PC-3 (cell line): ENCODE measurements at regions of chr1 and their contacts with region 1.

Region 1: DNA sequence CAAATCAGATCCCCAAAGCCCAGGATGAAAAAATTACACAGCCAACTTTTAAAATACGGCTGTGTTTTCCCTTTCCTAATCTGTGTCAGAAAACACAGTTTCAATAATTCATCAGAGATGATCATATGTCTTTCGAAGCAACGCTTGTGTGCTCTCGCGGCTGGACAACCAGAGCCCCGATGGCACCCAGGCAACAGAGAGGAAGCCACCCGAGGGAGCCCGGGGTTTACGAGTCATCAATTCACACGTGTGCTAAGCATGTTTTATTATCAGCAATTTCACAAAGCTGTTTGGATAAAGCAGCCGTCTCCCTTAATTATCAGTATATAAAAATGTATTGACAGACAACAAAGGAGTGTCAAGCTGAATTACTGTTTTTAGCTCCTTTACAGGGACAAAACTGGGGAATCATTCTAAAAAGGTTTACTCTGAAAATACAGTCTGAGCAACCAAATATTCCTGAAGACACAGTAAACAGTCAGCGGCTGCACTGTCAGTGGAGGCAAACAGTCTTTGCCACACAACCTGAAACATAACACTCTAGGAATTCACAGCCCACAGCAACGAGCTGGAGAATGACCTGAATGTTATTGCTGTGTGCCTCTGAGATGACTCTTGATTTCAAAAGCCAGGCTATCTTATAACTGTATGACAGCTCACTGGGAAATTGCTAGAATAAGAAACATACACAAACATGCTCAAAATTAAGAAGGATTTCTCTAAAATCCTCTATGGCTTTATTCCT is 201.0 kb downstream of the SIPA1L2 start:
- DNase-seq: peak; percentile 62
- ATAC-seq: peak; percentile 58
- H3K4me3 ChIP-seq: no peak overlapping the region
- H3K27ac ChIP-seq: no peak overlapping the region
- H3K4me1 ChIP-seq: peaks cover 31% of the 10 kb centered on the region
- H3K27me3 ChIP-seq: no peaks in the 10 kb centered on the region
- CTCF ChIP-seq: no peak

Region 2: DNA sequence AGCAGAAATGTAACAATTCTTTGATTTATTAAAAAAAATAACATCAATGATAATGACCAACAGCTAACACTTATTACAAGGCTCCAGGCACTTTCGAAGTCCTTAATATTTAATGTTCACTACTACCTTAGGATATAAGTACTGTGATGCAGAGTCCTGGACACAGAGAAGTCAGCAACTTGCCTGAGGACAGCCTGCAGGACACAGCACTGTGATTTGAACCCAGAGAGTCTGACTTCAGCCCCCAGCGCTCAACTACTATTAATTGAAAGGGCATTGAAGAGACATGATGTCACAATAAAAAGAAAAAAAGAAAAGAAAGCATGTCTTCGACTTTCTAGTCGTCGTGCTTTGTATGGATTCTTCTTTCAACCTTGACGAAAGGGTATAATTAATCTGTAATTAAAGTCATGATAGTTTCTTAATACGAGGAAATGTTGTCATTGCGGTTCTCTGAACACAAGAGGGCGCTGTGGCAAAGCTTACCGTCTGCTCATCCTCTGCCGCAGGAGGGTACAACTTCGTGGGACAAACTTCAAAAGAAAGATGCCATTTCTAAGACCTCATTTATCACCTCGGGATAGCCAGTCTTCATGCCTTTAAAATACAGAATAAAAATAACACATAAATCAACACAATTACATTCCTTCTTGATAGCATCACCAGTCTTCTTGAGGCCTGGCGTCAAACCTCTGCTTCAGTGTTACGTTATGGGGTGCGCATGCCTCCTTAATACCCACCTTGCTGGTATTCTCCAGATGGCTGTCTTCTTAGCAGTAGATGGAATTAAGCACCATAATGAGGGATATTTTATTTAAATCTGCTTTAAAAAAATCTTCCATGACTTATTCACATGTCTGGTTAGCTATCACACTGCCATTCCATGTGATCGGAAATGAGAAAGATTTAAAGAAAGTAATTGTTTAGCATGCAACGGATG is 562.3 kb before region 1 on chr1:
- CTCF ChIA-PET with region 1: no interaction called
- POLR2A ChIA-PET with region 1: no interaction called
- intact Hi-C with region 1: loop called (anchors 10 kb)
- DNase-seq: peak; percentile 79
- ATAC-seq: peak; percentile 67
- H3K4me3 ChIP-seq: no peak overlapping the region
- H3K27ac ChIP-seq: no peak overlapping the region
- H3K4me1 ChIP-seq: peaks cover 5% of the 10 kb centered on the region; the same call in 1 of the 2 replicates
- H3K27me3 ChIP-seq: no peaks in the 10 kb centered on the region
- CTCF ChIP-seq: peak; percentile 99

Region 3: GRCh38 chr1:232226197-232226712 is 202.7 kb before region 1 on chr1:
- CTCF ChIA-PET with region 1: no interaction called
- POLR2A ChIA-PET with region 1: no interaction called
- intact Hi-C with region 1: loop called (anchors 2 kb)
- DNase-seq: peak; percentile 97
- ATAC-seq: peak; percentile 64
- H3K4me3 ChIP-seq: peak overlapping the region; percentile 25; the same call in 1 of the 2 replicates
- H3K27ac ChIP-seq: peak overlapping the region; percentile 62
- H3K4me1 ChIP-seq: peaks cover 50% of the 10 kb centered on the region
- H3K27me3 ChIP-seq: no peaks in the 10 kb centered on the region
- CTCF ChIP-seq: no peak

Region 4: DNA sequence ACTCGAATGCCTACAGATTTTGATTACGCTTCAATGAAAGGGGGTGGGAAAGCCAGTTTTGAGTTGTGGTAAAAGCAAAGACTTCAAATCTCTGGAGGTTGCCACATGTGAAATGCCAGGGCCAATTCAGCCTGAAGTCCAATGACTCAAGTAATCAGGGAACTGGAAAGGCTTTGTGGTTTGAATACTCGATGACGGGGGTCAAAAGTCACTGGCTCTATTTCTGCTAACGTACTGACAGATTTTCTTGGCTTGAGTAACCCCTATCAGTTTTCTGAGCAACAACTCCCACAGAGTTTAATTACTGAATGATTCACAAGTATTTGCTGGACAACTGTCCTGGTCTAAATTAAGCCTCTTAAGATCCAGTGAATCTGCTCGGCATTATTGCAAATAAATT is 48.8 kb after region 1 on chr1:
- CTCF ChIA-PET with region 1: no interaction called
- POLR2A ChIA-PET with region 1: no interaction called
- intact Hi-C with region 1: loop called (anchors 2 kb)
- DNase-seq: peak; percentile 99
- ATAC-seq: peak; percentile 87
- H3K4me3 ChIP-seq: no peak overlapping the region
- H3K27ac ChIP-seq: peak overlapping the region; percentile 83
- H3K4me1 ChIP-seq: peaks cover 32% of the 10 kb centered on the region
- H3K27me3 ChIP-seq: no peaks in the 10 kb centered on the region
- CTCF ChIP-seq: no peak

Region 5: GRCh38 chr1:232528472-232529089 is 99.6 kb after region 1 on chr1:
- CTCF ChIA-PET with region 1: no interaction called
- POLR2A ChIA-PET with region 1: no interaction called
- intact Hi-C with region 1: loop called (anchors 1 kb)
- DNase-seq: no peak
- ATAC-seq: no peak
- H3K4me3 ChIP-seq: no peak overlapping the region
- H3K27ac ChIP-seq: peak overlapping the region; percentile 81
- H3K4me1 ChIP-seq: peaks cover 29% of the 10 kb centered on the region
- H3K27me3 ChIP-seq: no peaks in the 10 kb centered on the region
- CTCF ChIP-seq: no peak

Region 6: GRCh38 chr1:232553050-232553754 is 124.2 kb after region 1 on chr1:
- CTCF ChIA-PET with region 1: no interaction called
- POLR2A ChIA-PET with region 1: no interaction called
- intact Hi-C with region 1: no loop called
- DNase-seq: no peak
- ATAC-seq: no peak
- H3K4me3 ChIP-seq: no peak overlapping the region
- H3K27ac ChIP-seq: no peak overlapping the region
- H3K4me1 ChIP-seq: no peaks in the 10 kb centered on the region
- H3K27me3 ChIP-seq: no peaks in the 10 kb centered on the region
- CTCF ChIP-seq: no peak

Region 7: DNA sequence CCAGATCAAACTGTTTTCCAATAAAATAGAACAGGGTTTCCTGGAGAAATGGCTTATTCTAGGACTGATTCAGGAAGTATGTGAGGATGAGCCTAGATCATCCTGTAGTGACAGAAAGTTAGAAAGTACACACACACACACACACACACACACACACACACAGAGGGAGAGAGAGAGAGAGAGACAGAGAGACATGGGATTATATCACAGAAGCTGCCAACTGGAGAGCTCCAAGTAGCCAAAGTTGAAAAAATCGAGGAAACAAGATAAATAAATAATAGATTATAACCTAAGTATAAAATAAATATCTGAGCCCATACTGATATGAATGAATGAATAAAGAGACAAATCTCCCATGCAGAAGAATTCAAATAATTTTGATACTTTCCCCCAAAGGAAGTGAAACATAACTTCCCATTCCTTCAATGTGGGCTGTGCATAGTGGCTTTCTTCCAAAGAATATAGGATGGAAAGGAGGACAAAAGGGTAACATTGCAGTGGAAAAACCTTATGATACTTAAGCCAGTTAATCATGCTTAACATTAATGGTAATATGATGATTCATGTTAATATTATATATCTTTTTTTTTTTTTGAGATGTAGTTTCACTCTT is 693.1 kb after region 1 on chr1:
- CTCF ChIA-PET with region 1: no interaction called
- POLR2A ChIA-PET with region 1: interaction called, 12 read pairs
- intact Hi-C with region 1: no loop called
- DNase-seq: no peak
- ATAC-seq: no peak
- H3K4me3 ChIP-seq: no peak overlapping the region
- H3K27ac ChIP-seq: no peak overlapping the region
- H3K4me1 ChIP-seq: no peaks in the 10 kb centered on the region
- H3K27me3 ChIP-seq: no peaks in the 10 kb centered on the region
- CTCF ChIP-seq: no peak